Activated T-helper 2 cell treated with anti-CD3 and anti-CD28 coated beads, Interferon-gamma antibody, Interleukin-2, Interleukin-4, amounts not matched to agents 10 μg/mL and 5 μg/mL and 100 μg/mL, durations not matched to agents 14 hours and 24 hours and 36 hours (primary cell): ENCODE measurements at regions of chr5 and their contacts with region 1.

Region 1: DNA sequence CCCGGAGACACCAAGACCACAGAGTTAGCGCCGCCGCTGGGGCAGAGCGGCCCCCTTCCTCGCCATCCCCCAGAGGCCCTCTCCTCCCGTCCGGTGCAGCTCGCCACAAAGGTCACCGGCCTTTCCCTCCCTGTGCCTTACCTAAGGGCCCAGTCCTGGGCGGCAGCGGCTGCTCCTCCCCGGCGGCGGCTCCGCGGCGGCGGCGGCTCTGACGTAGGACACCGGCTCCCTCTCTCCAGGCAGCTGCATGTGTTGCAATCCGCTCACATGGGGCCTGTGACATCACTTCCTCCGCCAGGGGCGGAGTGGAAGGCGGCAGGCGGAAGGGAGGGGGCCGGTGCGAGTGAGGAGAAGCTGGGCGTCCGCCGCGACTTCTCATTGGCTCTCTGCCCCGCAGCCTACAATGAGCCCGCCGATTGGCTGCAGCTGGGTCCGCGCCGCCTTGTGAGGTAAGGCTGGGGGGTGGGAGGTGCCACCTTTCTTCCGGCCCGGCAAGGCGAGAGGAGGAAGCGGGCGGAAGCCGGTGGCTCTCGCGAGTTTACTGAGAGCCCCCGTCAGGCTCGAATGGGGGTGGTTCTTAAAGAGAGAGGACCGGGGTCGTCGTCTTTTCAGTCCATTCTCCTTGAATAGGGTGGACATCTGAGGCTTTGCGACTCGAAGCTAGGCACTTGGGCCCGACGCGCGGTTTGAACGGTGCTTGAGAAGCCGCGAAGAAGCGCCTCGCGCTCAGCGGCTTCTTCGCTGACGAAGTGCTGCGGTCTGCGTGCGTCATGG is at the start of gene ETF1:
- DNase-seq: peak; percentile 100
- H3K4me3 Mint-ChIP-seq: peak within 1 kb of the TSS; percentile 100
- H3K27ac Mint-ChIP-seq: peak within 1 kb of the TSS; percentile 100
- H3K4me1 Mint-ChIP-seq: peaks cover 56% of the 10 kb centered on the region
- H3K27me3 Mint-ChIP-seq: no peaks in the 10 kb centered on the region
- total RNA-seq, gene ETF1: 169 and 170 TPM in 2 replicates

Region 2: GRCh38 chr5:138264183-138264582 is 279.0 kb before region 1 on chr5:
- intact Hi-C with region 1: no loop called
- DNase-seq: no peak
- H3K4me3 Mint-ChIP-seq: no peak overlapping the region
- H3K27ac Mint-ChIP-seq: no peak overlapping the region
- H3K4me1 Mint-ChIP-seq: no peaks in the 10 kb centered on the region
- H3K27me3 Mint-ChIP-seq: peaks cover 3% of the 10 kb centered on the region

Region 3: GRCh38 chr5:138337685-138338410 is 205.3 kb before region 1 on chr5 and contains the start of gene FAM53C:
- intact Hi-C with region 1: loop called (anchors 1 kb)
- DNase-seq: peak; percentile 91
- H3K4me3 Mint-ChIP-seq: peak within 1 kb of the TSS; percentile 91
- H3K27ac Mint-ChIP-seq: peak within 1 kb of the TSS; percentile 98
- H3K4me1 Mint-ChIP-seq: peaks cover 37% of the 10 kb centered on the region
- H3K27me3 Mint-ChIP-seq: no peaks in the 10 kb centered on the region
- total RNA-seq, gene FAM53C: 24.4 and 26.1 TPM in 2 replicates

Region 4: DNA sequence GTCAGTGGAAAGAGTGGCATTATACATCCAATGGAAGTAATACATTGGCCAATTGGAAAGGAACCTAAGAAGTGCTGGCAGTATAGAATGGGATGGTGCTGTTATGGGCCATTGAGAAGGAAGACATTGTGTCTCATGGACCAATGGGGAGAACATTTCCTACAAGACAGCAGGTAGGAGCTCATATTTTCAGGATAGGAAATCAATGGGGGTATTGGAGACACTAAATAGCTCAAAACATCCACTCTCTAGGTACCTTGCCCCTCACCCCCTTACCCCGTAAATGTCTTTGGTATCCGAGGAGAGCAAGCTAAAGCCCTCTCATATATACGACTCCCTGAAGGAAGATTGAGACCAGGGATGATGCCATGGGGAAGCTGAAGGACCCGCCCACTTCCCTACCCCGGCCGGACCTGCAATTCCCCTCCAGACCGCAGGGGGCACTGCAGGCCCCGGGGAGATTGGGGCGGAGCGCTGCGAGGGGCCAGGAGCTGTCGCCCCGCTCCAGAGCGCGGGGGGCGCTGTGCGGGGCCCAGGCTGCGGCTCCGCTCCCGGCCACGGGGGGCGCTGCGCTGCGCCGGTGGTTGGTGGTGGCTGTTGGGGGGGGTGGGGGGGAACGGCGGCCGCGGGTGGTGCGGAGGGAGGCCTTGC is 190.9 kb before region 1 on chr5 and contains the start of gene KDM3B:
- intact Hi-C with region 1: loop called (anchors 5 kb)
- DNase-seq: peak; percentile 93
- H3K4me3 Mint-ChIP-seq: peak within 1 kb of the TSS; percentile 97
- H3K27ac Mint-ChIP-seq: peak within 1 kb of the TSS; percentile 94
- H3K4me1 Mint-ChIP-seq: peaks cover 37% of the 10 kb centered on the region
- H3K27me3 Mint-ChIP-seq: no peaks in the 10 kb centered on the region
- total RNA-seq, gene KDM3B: 52.8 and 54.5 TPM in 2 replicates

Region 5: DNA sequence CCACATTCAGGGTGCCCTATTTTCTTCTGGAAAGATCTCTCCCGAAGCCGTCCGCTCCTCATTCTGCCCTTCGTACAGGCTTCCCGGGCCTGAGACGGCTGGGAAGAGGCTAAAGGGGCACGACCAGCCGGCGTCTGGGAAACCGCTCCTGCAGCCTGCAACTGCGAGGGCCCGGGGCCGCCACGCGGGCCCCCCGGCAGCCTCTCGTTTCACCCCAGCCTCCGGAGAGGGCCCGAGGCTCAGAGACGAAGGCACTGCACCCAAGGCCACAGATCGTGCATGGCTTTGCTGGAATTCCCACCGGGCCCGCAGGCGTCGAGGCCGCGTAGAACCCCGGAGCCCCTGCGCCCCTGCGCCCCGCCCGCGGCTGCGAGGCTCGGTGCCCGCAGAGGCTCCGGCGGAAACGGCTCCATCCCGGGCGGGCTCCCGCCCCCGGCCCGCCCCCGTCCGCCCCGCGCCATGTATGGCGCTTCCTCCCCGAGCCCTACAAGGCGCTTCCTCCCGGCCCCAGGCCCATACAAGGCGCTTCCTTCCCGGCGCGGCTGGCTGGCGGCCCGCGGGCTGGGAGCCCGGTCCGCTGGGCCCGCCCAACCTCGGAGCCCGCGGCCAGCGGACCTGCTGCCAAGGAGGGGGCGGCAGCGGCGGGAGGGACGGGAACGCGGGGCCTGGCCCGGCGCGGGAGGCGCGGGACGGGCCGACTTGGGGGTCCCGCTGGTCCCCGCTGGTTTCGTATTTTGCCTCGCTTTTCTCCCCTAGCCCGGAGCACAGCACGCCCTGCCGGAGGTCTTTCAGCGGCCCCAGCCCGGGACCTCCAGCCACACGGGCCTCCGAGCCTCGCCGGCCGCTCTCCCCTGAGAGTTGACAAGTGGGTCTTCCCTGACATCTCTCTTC is 51.2 kb before region 1 on chr5:
- intact Hi-C with region 1: loop called (anchors 2 kb)
- DNase-seq: peak; percentile 81
- H3K4me3 Mint-ChIP-seq: peak overlapping the region; percentile 91
- H3K27ac Mint-ChIP-seq: no peak overlapping the region
- H3K4me1 Mint-ChIP-seq: peaks cover 14% of the 10 kb centered on the region
- H3K27me3 Mint-ChIP-seq: peaks cover 21% of the 10 kb centered on the region